CD8-positive, alpha-beta T cell (primary cell): ENCODE measurements at regions of chr19 and their contacts with region 1.

Region 1: GRCh38 chr19:53553884-53554791 is 16.2 kb downstream of the ZNF331 start:
- DNase-seq: peak; percentile 76 to 98 (median 90)
- ATAC-seq: peak; percentile 72
- H3K4me3 ChIP-seq: peak overlapping the region; percentile 58 to 61
- H3K4me3 Mint-ChIP-seq: peak overlapping the region; percentile 96
- H3K27ac ChIP-seq: peak overlapping the region; percentile 93 to 97
- H3K27ac Mint-ChIP-seq: peak overlapping the region; percentile 99
- H3K4me1 ChIP-seq: peaks cover 12% of the 10 kb centered on the region
- H3K4me1 Mint-ChIP-seq: peaks cover 25% of the 10 kb centered on the region
- H3K27me3 ChIP-seq: no peaks in the 10 kb centered on the region
- H3K27me3 Mint-ChIP-seq: no peaks in the 10 kb centered on the region
- CTCF ChIP-seq: no peak

Region 2: DNA sequence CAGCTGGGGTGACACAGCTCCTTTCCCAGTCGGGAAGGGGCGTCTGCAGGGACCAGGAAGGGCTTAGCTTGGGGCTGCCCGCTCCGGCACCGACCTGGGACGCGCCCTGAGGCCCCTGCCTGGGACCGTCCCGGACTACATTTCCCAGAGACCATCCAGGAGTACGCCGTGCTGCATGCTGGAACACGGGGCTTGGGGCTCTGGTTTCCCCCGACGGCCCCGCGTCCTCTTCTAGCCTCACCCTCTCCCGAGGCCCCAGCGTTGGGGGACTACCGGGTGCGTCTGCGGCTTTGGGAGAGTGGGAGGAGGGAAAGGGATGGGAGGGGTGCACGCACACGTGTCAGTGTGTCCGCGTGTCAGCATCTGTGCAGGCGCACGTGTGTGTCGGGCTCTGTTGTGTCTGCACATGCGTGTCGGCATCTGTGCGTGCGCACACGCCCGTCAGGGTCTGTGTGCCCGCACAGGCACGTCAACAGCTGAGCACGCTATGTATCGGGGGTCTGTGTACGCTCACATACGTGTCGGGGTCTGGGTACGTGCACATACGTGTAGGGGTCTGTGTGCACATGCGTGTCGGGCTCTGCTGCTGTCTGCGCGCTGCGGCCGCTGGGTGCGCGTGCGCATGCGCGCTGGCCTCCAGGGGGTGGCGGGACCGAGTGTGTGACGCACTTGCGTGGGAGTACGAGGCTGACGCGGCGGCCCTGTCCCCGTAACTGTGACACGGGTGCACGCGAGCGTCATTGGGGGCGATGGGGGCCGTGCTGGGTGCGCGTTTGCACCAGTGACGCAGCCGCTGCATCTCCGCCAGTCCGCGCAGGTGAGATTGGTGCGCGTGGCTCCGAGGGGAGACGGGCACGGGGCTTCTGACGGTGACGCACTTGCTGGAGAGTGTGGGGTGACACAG is 16.4 kb before region 1 on chr19 and contains the start of gene ZNF331:
- CTCF ChIA-PET with region 1: no interaction called
- POLR2A ChIA-PET with region 1: interaction called, 3 read pairs
- intact Hi-C with region 1: loop called (anchors 1 kb)
- DNase-seq: peak; percentile 74 to 97 (median 91)
- ATAC-seq: peak; percentile 78
- H3K4me3 ChIP-seq: peak within 1 kb of the TSS; percentile 71 to 87
- H3K4me3 Mint-ChIP-seq: peak within 1 kb of the TSS; percentile 94
- H3K27ac ChIP-seq: peak within 1 kb of the TSS; percentile 94 to 100
- H3K27ac Mint-ChIP-seq: peak within 1 kb of the TSS; percentile 98
- H3K4me1 ChIP-seq: peaks cover 11% of the 10 kb centered on the region
- H3K4me1 Mint-ChIP-seq: peaks cover 30% of the 10 kb centered on the region
- H3K27me3 ChIP-seq: no peaks in the 10 kb centered on the region
- H3K27me3 Mint-ChIP-seq: no peaks in the 10 kb centered on the region
- CTCF ChIP-seq: no peak
- total RNA-seq, gene ZNF331: 784 to 793 TPM